Psoas muscle (tissue), 8 donors: ENCODE measurements at regions of chr16 and their contacts with region 1.

Region 1: DNA sequence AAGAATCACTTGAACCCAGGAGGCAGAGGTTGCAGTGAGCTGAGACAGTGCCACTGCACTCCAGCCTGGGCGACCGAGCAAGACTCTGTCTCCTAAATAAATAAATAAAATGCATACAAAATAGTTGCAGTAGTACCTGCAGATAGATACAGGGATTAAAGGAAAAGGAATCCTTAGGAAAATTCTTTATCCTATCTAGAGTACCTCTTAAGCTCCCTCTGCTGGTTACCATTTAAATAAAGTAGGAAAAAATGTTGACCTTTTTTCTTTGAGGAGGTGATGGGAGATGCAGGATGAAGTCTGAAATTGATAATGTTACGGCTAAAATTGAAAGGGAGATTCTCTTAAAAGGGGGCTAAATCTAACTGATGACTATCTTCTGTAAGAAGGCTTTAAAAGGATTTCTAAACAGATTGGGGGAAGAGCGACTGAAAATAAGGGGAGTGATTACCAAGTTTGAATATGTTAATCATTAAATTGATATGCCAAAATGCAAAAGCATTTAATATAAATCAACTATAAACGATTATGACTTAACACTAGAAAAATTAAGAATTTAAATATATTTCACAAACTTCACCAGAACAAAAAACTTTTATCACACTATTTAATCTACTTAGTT is 29.4 kb downstream of the C16orf87 start:
- DNase-seq: no peak
- ATAC-seq: peak; percentile 56 to 79 (median 70)
- H3K4me3 ChIP-seq: no peak overlapping the region
- H3K27ac ChIP-seq: no peak overlapping the region
- H3K4me1 ChIP-seq: peaks cover 17% of the 10 kb centered on the region
- H3K27me3 ChIP-seq: no peaks in the 10 kb centered on the region
- CTCF ChIP-seq: peak; percentile 54

Region 2: DNA sequence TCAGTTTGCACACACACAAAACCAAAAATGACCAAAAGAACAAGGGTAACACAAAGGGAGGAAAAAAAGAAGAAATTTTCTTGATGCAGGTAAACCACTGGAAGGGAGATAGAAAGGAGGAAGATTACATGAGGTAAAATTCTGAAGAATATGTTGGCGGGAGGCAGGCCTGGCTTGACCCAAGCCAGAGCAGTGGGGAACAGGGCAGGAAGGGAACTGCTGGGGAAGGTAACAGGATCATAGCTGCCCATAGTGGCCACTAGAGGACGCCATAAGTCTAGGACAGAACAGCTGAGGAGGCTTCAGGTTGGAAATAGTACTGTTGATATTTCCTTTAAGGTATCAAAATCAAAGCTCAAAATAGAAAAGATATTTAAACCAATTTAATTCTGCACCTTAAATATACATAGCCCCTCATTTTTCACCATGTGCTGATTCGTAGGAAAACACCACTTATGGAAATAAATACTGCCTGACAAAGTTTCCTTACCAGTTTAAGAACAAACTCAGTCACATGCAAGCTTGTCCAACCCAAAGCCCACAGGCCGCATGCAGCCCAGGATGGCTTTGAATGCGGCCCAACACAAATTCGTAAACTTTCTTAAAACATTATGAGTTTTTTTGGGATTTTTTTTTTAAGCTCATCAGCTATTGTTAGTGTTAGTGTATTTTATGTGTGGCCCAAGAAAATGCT is 128.1 kb before region 1 on chr16:
- intact Hi-C with region 1: loop called (anchors 2 to 5 kb)
- DNase-seq: peak in 1 of 2 donors; percentile 25
- ATAC-seq: peak; percentile 86 to 97 (median 95)
- H3K4me3 ChIP-seq: no peak overlapping the region
- H3K27ac ChIP-seq: no peak overlapping the region
- H3K4me1 ChIP-seq: no peaks in the 10 kb centered on the region
- H3K27me3 ChIP-seq: no peaks in the 10 kb centered on the region
- CTCF ChIP-seq: peak; percentile 92

Region 3: GRCh38 chr16:46689365-46690280 is 111.9 kb before region 1 on chr16 and contains the start of gene ORC6:
- intact Hi-C with region 1: loop called in 1 of 2 experiments (anchors 5 kb)
- DNase-seq: peak; percentile 98 to 99
- ATAC-seq: peak; percentile 90 to 93 (median 90)
- H3K4me3 ChIP-seq: peak within 1 kb of the TSS; percentile 96
- H3K27ac ChIP-seq: peak within 1 kb of the TSS; percentile 96
- H3K4me1 ChIP-seq: peaks cover 36% of the 10 kb centered on the region
- H3K27me3 ChIP-seq: no peaks in the 10 kb centered on the region
- CTCF ChIP-seq: no peak
- total RNA-seq, gene ORC6: 0.26 to 0.79 (median 0.34) TPM

Region 4: GRCh38 chr16:46711106-46712058 is 90.2 kb before region 1 on chr16:
- intact Hi-C with region 1: loop called in 1 of 2 experiments (anchors 5 kb)
- DNase-seq: peak; percentile 65 to 80
- ATAC-seq: peak; percentile 77 to 92 (median 86)
- H3K4me3 ChIP-seq: no peak overlapping the region
- H3K27ac ChIP-seq: peak overlapping the region; percentile 72
- H3K4me1 ChIP-seq: peaks cover 24% of the 10 kb centered on the region
- H3K27me3 ChIP-seq: no peaks in the 10 kb centered on the region
- CTCF ChIP-seq: no peak

Region 5: GRCh38 chr16:46757339-46758050 is 44.0 kb before region 1 on chr16:
- intact Hi-C with region 1: loop called in 1 of 2 experiments (anchors 5 kb)
- DNase-seq: peak; percentile 77 to 91
- ATAC-seq: peak; percentile 92 to 93 (median 92)
- H3K4me3 ChIP-seq: peak overlapping the region; percentile 47
- H3K27ac ChIP-seq: peak overlapping the region; percentile 83
- H3K4me1 ChIP-seq: peaks cover 19% of the 10 kb centered on the region
- H3K27me3 ChIP-seq: no peaks in the 10 kb centered on the region
- CTCF ChIP-seq: no peak